CD4-positive, alpha-beta memory T cell (primary cell): ENCODE measurements at regions of chr6 and their contacts with region 1.

Region 1: DNA sequence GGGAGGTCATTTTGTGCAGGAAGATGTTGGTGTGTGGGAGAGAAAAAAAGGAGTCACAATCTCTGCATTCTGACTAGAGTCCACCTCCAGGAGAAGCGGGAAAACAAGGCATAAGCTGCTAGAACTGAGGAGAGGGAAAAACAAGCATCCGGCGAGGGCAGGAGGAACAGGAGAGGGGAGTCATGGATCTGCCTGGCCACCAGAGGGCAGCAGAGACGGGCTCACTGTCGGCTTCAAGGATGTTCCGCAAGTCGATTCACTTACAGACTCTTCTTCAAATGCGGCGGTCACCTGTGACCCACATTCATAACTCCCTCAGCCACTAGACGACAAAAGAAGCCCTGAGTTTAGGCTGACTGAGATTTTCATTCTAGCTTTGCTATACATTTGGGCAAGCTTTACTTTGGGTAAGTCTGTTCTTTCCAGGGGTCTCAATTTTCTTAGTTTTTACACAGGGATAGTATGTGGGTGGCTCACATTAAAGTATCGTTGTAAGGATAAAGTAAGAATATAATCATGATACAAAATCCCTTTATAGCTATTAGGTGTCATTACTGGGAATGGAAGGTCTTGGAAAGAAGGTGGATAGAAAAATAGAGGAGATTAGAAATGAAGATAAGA is 6.6 kb upstream of the BTNL2 start:
- DNase-seq: peak; percentile 79 to 82 (median 80)
- H3K4me3 ChIP-seq: no peak overlapping the region
- H3K4me3 Mint-ChIP-seq: no peak overlapping the region
- H3K27ac ChIP-seq: no peak overlapping the region
- H3K27ac Mint-ChIP-seq: peak overlapping the region in 1 of 7 donors; percentile 43
- H3K4me1 ChIP-seq: peaks cover 3% of the 10 kb centered on the region
- H3K4me1 Mint-ChIP-seq: peaks cover 5 to 12% (median 8%) of the 10 kb centered on the region in 4 donors
- H3K27me3 ChIP-seq: peaks cover 16% of the 10 kb centered on the region
- H3K27me3 Mint-ChIP-seq: peaks cover 26 to 39% of the 10 kb centered on the region in 2 donors

Region 2: DNA sequence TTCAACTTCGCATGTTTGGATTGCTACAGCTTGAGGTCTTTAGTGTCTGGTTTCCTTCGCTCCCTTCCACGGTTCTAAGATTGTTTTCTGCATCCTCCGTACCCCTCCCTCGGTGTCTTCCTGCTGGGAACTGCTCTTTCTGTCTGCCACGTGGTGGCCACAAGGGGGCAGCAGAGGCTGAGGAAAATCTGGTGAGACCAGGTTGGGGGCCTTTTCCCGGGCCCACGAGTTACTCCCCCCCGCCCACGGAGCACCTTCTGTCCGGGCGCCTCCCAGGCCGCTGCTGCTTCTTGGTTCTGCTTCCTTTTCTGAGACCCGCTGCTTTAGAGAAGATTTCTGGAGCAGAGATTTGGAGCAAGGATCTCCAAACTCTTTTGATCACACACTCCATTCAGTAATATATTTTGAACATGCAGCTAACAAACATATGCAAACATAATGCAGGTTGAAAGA is 168.6 kb before region 1 on chr6:
- CTCF ChIA-PET with region 1: interaction called, 3 read pairs
- POLR2A ChIA-PET with region 1: no interaction called
- intact Hi-C with region 1: loop called (anchors 1 kb)
- DNase-seq: peak; percentile 52 to 66 (median 58)
- H3K4me3 ChIP-seq: no peak overlapping the region
- H3K4me3 Mint-ChIP-seq: peak overlapping the region in 7 of 8 donors; percentile 4 to 88 (median 62)
- H3K27ac ChIP-seq: no peak overlapping the region
- H3K27ac Mint-ChIP-seq: peak overlapping the region in 4 of 7 donors; percentile 43 to 79 (median 46)
- H3K4me1 ChIP-seq: peaks cover 9% of the 10 kb centered on the region
- H3K4me1 Mint-ChIP-seq: peaks cover 0 to 11% (median 7%) of the 10 kb centered on the region in 4 donors
- H3K27me3 ChIP-seq: no peaks in the 10 kb centered on the region
- H3K27me3 Mint-ChIP-seq: no peaks in the 10 kb centered on the region

Region 3: DNA sequence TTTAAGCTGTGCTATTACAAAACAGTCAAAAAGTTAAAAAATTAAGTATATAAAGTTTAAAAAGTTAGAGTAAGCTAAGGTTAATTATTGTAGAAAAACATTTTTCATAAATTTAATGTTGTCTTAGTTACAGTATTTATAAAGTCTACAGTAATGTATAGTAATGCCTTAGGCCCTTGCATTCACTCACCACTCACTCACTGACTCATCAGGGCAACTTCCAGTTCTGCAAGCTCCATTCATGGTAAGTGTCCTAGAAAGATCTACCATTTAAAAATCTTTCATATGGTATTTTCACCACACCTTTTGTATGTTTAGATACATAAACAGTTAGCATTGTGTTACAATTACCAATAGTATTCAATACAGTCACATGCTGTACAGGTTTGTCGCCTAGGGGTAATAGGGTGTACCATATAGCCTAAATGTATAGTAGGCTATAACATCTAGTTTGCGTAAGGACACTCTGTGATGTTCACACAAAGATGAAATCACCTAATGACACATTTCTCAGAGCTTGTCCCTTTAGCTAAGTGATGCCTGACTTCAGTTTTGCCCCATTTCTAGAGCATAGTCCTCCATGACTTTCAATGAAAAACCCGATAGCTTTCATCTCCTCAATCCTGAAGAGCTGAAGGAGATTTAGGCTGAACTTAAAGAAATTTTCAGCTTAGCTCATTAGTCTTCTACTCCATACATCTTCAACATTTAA is 11.2 kb after region 1 on chr6:
- CTCF ChIA-PET with region 1: interaction called, 19 read pairs
- POLR2A ChIA-PET with region 1: no interaction called
- intact Hi-C with region 1: no loop called
- DNase-seq: no peak
- H3K4me3 ChIP-seq: no peak overlapping the region
- H3K4me3 Mint-ChIP-seq: no peak overlapping the region
- H3K27ac ChIP-seq: no peak overlapping the region
- H3K27ac Mint-ChIP-seq: no peak overlapping the region
- H3K4me1 ChIP-seq: no peaks in the 10 kb centered on the region
- H3K4me1 Mint-ChIP-seq: no peaks in the 10 kb centered on the region
- H3K27me3 ChIP-seq: no peaks in the 10 kb centered on the region
- H3K27me3 Mint-ChIP-seq: peaks cover 17 to 18% of the 10 kb centered on the region in 2 donors

Region 4: GRCh38 chr6:32622545-32623401 is 209.2 kb after region 1 on chr6:
- CTCF ChIA-PET with region 1: interaction called, 7 read pairs
- POLR2A ChIA-PET with region 1: no interaction called
- intact Hi-C with region 1: loop called (anchors 10 kb)
- DNase-seq: peak; percentile 71 to 90 (median 86)
- H3K4me3 ChIP-seq: peak overlapping the region in 1 of 2 donors; percentile 30
- H3K4me3 Mint-ChIP-seq: peak overlapping the region; percentile 28 to 75 (median 71)
- H3K27ac ChIP-seq: peak overlapping the region; percentile 85
- H3K27ac Mint-ChIP-seq: peak overlapping the region; percentile 82 to 99 (median 95)
- H3K4me1 ChIP-seq: peaks cover 53% of the 10 kb centered on the region
- H3K4me1 Mint-ChIP-seq: peaks cover 37 to 68% (median 44%) of the 10 kb centered on the region in 4 donors
- H3K27me3 ChIP-seq: no peaks in the 10 kb centered on the region
- H3K27me3 Mint-ChIP-seq: no peaks in the 10 kb centered on the region

Region 5: GRCh38 chr6:32700391-32701040 is 287.0 kb after region 1 on chr6:
- CTCF ChIA-PET with region 1: interaction called, 96 read pairs
- POLR2A ChIA-PET with region 1: no interaction called
- intact Hi-C with region 1: loop called (anchors 1 kb)
- DNase-seq: peak in 4 of 5 donors; percentile 29 to 45 (median 38)
- H3K4me3 ChIP-seq: no peak overlapping the region
- H3K4me3 Mint-ChIP-seq: peak overlapping the region in 2 of 8 donors; percentile 35 to 58
- H3K27ac ChIP-seq: no peak overlapping the region
- H3K27ac Mint-ChIP-seq: peak overlapping the region in 1 of 7 donors; percentile 90
- H3K4me1 ChIP-seq: no peaks in the 10 kb centered on the region
- H3K4me1 Mint-ChIP-seq: peaks cover 0 to 4% (median 1%) of the 10 kb centered on the region in 4 donors
- H3K27me3 ChIP-seq: peaks cover 9% of the 10 kb centered on the region
- H3K27me3 Mint-ChIP-seq: peaks cover 24 to 26% of the 10 kb centered on the region in 2 donors

Region 6: DNA sequence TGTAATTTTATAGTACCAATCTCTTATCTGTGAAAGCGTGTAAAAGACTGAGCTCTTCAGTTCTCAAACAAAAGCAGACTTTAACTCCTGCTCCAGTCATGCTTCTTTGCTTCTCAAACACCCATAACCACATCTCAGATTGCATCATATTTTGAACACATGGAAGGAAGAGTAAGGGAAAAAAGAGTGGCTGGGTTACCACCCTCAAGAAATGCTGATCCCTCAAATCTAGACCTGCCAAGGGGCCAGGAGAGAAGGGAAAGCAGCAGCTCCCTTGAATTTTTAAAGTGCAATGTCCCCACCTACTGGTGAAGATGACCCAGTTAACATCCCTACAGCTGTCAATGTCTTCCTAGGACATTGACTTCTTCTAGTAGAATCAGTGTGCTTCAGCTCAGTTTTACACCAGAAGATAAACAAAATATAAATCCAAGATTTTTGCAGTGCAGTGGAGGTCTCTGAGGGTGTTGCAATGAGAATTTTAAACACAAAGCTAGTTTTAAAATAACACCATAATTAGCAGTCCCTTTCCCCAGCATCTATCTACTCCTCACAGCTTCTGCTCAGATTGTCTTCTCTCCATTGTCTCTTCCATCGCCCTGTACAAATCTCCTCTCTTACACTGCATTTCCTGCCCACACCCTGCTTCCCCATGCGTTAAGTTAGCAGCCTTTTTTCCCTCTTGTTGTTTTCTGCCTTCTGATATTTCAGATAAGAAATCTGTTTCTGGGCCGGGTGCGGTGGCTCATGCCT is 372.4 kb after region 1 on chr6:
- CTCF ChIA-PET with region 1: interaction called, 109 read pairs
- POLR2A ChIA-PET with region 1: no interaction called
- intact Hi-C with region 1: loop called (anchors 1 kb)
- DNase-seq: peak in 4 of 5 donors; percentile 34 to 47 (median 42)
- H3K4me3 ChIP-seq: no peak overlapping the region
- H3K4me3 Mint-ChIP-seq: no peak overlapping the region
- H3K27ac ChIP-seq: no peak overlapping the region
- H3K27ac Mint-ChIP-seq: peak overlapping the region in 1 of 7 donors; percentile 71
- H3K4me1 ChIP-seq: no peaks in the 10 kb centered on the region
- H3K4me1 Mint-ChIP-seq: no peaks in the 10 kb centered on the region
- H3K27me3 ChIP-seq: no peaks in the 10 kb centered on the region
- H3K27me3 Mint-ChIP-seq: peaks cover 25 to 26% of the 10 kb centered on the region in 2 donors